ENCODE measurements at regions of chr6 and their contacts with region 1.

Region 1: GRCh38 chr6:144284783-144285547 is at the start of gene UTRN:
- DNase-seq: peak; percentile 90
- total RNA-seq, gene UTRN: 96.4 TPM

Region 2: DNA sequence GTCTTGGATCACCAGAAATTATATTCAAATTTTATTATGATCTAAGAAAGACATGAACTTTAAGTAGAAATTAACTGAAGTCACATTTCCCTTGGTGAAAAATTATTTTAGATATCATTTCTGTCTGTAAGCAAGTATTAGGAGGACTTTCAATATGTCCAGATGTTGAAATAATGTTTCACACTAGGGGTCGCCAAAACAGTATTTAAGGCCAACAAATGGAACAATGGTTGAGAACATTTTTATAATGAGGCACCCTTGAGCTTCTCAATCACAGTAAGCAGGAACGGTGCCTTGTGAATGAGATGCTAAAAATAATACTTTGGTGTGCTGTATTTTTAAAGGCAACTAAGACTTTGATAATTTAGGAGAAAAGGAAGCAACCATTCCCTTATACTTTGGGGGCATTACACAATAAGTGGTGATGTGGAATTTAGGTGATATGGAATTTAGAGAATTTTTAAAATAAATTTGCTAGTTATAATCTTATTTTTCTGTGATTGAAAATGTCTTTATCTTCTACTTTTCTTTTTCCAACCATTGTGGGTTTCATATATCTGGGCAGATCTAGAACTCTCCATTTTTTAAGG is 180.0 kb before region 1 on chr6:
- intact Hi-C with region 1: loop called (anchors 5 kb)
- DNase-seq: no peak

Region 3: DNA sequence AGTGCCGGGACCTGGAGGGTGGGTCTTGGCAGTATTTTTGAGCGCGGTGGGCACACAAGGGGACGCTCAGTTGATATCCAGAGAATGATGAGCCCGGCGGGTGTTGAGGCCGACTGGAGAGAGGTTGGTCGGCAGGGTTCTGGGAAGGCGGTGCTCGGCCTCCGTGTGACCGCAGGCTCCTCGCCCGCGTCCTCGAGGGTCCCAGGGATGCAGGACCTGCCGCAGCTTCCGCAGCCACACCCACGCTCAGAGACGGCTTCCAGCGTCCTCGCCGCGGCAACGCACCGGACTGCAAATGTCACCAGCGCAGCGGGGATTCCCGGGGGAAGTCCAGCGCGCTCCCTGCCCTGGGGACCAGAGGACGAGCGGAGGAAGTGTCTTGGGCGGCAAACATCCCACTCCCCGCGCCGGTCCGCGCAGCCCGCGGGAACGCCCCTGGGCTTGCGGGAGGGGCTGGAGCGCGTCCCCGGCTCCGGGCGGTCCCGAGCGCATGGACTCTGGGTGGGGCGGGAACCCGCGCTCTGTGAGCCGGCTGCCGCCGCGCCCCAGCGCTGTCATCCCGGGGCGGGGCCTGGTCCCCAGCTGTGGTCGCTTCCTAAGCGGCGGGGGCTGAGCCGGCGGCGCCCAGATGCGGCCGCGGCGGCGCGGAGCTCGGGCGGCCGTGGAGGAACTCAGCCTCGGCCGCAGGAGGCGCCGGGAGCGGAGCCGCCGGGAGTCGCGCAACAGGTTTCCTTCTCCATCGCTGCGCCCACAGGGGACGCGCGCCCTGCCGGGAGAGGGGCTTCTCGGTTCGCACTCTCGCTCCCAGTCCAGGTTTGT is 134.9 kb before region 1 on chr6 and contains the start of gene STX11:
- intact Hi-C with region 1: loop called (anchors 10 kb)
- DNase-seq: peak; percentile 93
- total RNA-seq, gene STX11: 8.8 TPM

Measured in cardiac septum (tissue), 1 donor.